Right ventricle myocardium inferior (tissue), 1 donor: ENCODE measurements at regions of chr5 and their contacts with region 1.

Region 1: DNA sequence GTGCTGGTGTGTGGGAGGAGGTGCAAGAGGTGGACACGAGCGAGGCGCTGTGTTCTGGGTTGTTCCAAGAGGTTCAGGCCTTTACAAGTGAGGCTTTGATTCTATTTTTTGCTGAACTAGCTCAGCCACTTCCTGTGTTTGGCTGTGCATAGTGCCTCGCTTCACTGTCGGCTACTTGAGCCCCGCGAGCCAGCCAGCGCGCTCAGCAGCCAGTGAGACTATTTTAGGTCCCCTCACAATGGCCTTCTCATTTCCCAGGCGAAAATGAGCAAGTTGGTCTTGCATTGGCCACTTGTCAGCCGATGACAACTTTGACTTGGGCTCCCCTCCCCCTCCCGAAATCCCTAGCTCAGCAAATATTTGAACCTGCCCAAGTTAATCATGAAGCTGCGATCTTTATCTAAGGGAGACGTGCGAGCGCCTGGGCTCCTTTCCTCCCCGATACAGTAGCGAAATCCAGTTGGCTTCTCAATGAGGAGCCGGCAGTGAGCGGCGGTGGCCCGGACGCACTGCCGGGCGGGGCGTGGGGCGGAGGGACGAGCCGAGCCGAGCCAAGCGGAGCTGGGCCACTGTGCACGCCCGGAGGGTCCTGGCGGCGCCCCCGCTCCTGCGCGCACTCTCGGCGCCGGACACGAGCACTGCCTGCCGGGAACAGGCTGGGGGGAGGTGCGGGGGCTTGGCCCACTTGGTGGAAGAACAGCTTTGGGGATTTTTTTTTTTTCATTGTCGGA is 72.6 kb downstream of the PIK3R1 start:
- DNase-seq: peak; percentile 84
- ATAC-seq: peak; percentile 85

Region 2: DNA sequence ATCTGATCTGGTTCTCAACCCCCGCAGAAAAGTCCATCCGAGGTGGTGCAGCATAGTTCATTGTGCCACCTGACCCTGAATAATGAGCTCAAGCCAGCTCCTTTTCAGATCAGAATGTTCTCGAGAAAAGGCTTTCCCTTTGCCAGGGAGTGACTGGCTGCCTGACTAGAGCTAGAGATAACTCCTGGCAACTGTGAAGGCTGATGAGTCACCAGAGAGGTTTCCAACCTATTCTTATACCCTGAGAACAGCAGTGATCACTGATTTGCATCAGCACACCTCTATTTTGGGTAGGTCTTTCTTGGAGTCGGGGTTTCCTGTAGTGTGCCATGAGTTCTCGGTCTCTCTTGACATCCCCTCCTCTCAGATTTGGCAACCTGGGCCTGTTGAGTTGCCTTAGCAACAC is 55.3 kb after region 1 on chr5:
- intact Hi-C with region 1: loop called (anchors 2 kb)
- DNase-seq: no peak
- ATAC-seq: peak; percentile 85

Region 3: DNA sequence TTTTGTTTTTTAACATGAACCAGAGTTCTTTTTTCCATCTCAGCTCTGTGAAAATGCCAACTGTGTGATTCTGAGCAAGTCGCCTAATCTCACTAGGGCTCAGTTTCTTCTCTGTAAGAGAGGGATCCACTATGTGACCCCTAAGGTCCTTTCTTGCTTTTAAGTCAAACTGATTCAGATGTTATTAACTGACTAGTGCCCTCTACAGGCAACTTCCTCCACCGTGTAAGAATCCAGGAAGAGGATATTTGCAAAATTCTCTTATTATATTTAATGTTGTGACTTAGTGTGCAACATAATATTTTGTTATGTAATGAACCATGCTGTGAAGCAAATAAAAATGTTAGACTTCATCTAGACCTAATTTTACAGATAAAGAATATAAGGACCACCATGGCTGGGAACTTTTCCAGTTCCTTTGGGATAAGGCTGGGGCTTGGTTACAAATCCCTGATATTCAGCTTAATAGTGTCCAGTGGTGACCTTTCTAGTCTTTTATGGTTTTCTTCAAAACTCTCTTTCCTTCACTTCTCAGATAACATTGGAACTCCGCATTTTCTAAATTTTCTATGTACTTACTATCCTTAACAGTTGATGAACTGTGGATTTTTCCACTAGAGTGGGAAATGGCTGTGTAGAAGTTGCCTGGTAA is 172.1 kb after region 1 on chr5:
- intact Hi-C with region 1: loop called (anchors 2 kb)
- DNase-seq: no peak
- ATAC-seq: peak; percentile 61

Region 4: DNA sequence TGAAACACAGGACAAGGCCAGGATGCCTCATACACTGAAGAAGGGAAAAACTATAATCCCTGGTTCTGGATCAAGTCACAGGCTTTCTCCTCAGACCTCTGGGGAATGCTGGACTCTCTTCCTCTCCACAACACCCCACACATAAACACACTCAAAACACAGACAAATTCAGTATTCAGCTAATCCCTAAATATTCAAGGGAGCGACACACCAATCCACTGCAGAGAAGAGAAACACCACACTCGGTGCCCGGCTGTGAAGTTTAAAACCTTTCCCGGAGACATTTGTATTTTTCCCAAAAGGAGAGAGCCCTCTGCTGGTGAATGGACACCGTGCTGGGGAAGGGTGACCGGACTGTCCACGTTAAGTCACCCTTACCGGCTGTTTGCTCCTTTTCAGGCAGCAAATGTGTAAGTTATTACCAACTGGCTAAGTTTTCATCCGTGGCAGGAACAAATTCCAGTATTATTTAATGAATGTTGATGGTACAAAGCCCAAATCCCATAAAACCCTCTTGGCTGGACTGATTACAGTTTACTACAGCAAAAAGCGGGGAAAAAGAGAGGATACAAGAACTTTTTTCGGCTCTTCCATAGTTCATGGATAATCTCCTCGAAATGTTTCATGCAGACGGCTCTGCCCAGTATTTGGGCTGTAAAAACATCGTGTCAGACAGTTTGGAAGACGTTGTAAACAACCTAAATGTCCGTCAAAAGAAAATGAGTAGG is 674.8 kb after region 1 on chr5:
- intact Hi-C with region 1: loop called (anchors 2 kb)
- DNase-seq: no peak
- ATAC-seq: peak; percentile 84

Region 5: GRCh38 chr5:69007726-69008368 is 719.7 kb after region 1 on chr5:
- intact Hi-C with region 1: loop called (anchors 5 kb)
- DNase-seq: no peak
- ATAC-seq: peak; percentile 75